ENCODE measurements at regions of chr14 and their contacts with region 1.

Region 1: GRCh38 chr14:69398053-69398817 is at the starts of genes ERH and SLC39A9:
- DNase-seq: peak; percentile 97
- H3K4me3 Mint-ChIP-seq: peak within 1 kb of the TSS; percentile 89
- H3K27ac Mint-ChIP-seq: peak within 1 kb of the TSS; percentile 99
- H3K4me1 Mint-ChIP-seq: peaks cover 26% of the 10 kb centered on the region
- H3K27me3 Mint-ChIP-seq: no peaks in the 10 kb centered on the region
- CTCF ChIP-seq: no peak
- total RNA-seq, gene ERH: 245 and 279 TPM in 2 replicates
- total RNA-seq, gene SLC39A9: 69.7 and 71.3 TPM in 2 replicates

Region 2: DNA sequence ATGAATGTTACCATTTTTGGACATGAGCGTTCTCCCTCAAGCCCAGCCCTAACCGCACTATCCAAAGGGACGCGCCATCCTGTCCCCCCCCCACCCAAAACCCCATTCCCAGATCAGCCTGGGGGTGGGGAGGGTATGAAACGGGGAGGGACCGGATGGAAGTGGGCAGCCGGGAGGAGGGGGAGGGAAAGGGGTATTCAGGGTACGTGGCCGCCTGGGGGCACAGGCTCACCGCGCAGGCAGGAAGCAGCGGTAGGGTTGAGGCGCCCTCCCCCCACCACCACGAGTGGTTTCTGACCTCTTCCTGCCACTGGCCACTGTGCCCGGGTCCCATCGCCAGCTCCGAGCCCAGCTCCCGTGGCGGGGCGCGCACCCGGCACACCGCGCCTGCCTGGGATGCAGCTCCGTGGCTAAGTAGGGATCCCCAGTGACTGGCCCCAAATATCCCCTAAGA is 420.5 kb before region 1 on chr14:
- CTCF ChIA-PET with region 1: no interaction called
- POLR2A ChIA-PET with region 1: no interaction called
- intact Hi-C with region 1: no loop called
- DNase-seq: peak; percentile 91
- H3K4me3 Mint-ChIP-seq: peak overlapping the region; percentile 78
- H3K27ac Mint-ChIP-seq: peak overlapping the region; percentile 95
- H3K4me1 Mint-ChIP-seq: peaks cover 55% of the 10 kb centered on the region
- H3K27me3 Mint-ChIP-seq: no peaks in the 10 kb centered on the region
- CTCF ChIP-seq: no peak

Region 3: GRCh38 chr14:69376439-69376838 is 21.8 kb before region 1 on chr14:
- CTCF ChIA-PET with region 1: no interaction called
- POLR2A ChIA-PET with region 1: interaction called, 13 read pairs
- intact Hi-C with region 1: no loop called
- DNase-seq: peak; percentile 73
- H3K4me3 Mint-ChIP-seq: no peak overlapping the region
- H3K27ac Mint-ChIP-seq: no peak overlapping the region
- H3K4me1 Mint-ChIP-seq: no peaks in the 10 kb centered on the region
- H3K27me3 Mint-ChIP-seq: no peaks in the 10 kb centered on the region
- CTCF ChIP-seq: no peak

Region 4: GRCh38 chr14:69387311-69387710 is 10.9 kb before region 1 on chr14:
- CTCF ChIA-PET with region 1: no interaction called
- POLR2A ChIA-PET with region 1: interaction called, 14 read pairs
- intact Hi-C with region 1: no loop called
- DNase-seq: peak; percentile 11
- H3K4me3 Mint-ChIP-seq: no peak overlapping the region
- H3K27ac Mint-ChIP-seq: peak overlapping the region; percentile 12
- H3K4me1 Mint-ChIP-seq: peaks cover 25% of the 10 kb centered on the region
- H3K27me3 Mint-ChIP-seq: no peaks in the 10 kb centered on the region
- CTCF ChIP-seq: no peak

Region 5: GRCh38 chr14:69460093-69460701 is 62.0 kb after region 1 on chr14:
- CTCF ChIA-PET with region 1: interaction called, 3 read pairs
- POLR2A ChIA-PET with region 1: interaction called, 30 read pairs
- intact Hi-C with region 1: loop called (anchors 1 kb)
- DNase-seq: peak; percentile 85
- H3K4me3 Mint-ChIP-seq: no peak overlapping the region
- H3K27ac Mint-ChIP-seq: no peak overlapping the region
- H3K4me1 Mint-ChIP-seq: no peaks in the 10 kb centered on the region
- H3K27me3 Mint-ChIP-seq: no peaks in the 10 kb centered on the region
- CTCF ChIP-seq: peak; percentile 70

Measured in MCF 10A (cell line).